PC-3 (cell line): ENCODE measurements at regions of chr13 and their contacts with region 1.

Region 1: GRCh38 chr13:60617991-60618733 is 221.1 kb downstream of the TDRD3 start:
- DNase-seq: peak; percentile 43
- ATAC-seq: peak; percentile 80
- H3K4me3 ChIP-seq: no peak overlapping the region
- H3K27ac ChIP-seq: no peak overlapping the region
- H3K4me1 ChIP-seq: no peaks in the 10 kb centered on the region
- H3K27me3 ChIP-seq: peaks cover 11% of the 10 kb centered on the region
- CTCF ChIP-seq: peak; percentile 62

Region 2: DNA sequence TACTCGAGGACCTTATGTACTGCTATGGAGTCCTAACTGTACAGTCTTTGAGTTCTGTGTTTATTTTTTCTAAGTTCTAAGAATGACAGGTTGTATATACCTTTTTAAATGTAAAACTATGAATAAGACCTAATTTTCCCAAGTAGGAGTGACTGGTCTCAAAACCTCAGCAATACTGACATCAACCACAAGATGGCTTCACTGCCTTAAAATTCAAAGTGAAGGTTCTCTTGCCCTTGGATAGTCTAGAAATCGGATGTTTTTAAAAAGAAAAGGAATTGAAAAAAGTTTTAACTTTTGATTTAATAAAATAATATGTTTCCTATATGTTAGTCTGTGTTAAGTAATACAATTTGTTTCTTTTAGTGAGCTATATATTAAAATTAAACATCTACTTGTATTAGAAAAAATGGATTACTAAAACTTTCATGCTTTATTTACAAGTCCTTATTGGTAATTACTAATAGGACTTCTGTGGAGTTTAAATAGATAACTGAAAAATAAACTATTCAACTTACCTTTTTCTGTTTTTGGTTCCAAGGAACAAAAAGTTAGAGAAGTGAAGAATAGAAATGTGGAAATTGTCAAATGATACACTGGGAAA is 169.2 kb before region 1 on chr13:
- CTCF ChIA-PET with region 1: no interaction called
- POLR2A ChIA-PET with region 1: no interaction called
- intact Hi-C with region 1: loop called (anchors 1 kb)
- DNase-seq: peak; percentile 52
- ATAC-seq: peak; percentile 48
- H3K4me3 ChIP-seq: no peak overlapping the region
- H3K27ac ChIP-seq: no peak overlapping the region
- H3K4me1 ChIP-seq: no peaks in the 10 kb centered on the region
- H3K27me3 ChIP-seq: no peaks in the 10 kb centered on the region
- CTCF ChIP-seq: peak; percentile 64

Region 3: GRCh38 chr13:60562081-60562780 is 55.9 kb before region 1 on chr13:
- CTCF ChIA-PET with region 1: interaction called, 11 read pairs
- POLR2A ChIA-PET with region 1: no interaction called
- intact Hi-C with region 1: no loop called
- DNase-seq: peak; percentile 5
- ATAC-seq: no peak
- H3K4me3 ChIP-seq: no peak overlapping the region
- H3K27ac ChIP-seq: no peak overlapping the region
- H3K4me1 ChIP-seq: no peaks in the 10 kb centered on the region
- H3K27me3 ChIP-seq: no peaks in the 10 kb centered on the region
- CTCF ChIP-seq: no peak

Region 4: GRCh38 chr13:60745343-60745742 is 127.2 kb after region 1 on chr13:
- CTCF ChIA-PET with region 1: no interaction called
- POLR2A ChIA-PET with region 1: no interaction called
- intact Hi-C with region 1: no loop called
- DNase-seq: no peak
- ATAC-seq: no peak
- H3K4me3 ChIP-seq: no peak overlapping the region
- H3K27ac ChIP-seq: no peak overlapping the region
- H3K4me1 ChIP-seq: no peaks in the 10 kb centered on the region
- H3K27me3 ChIP-seq: no peaks in the 10 kb centered on the region
- CTCF ChIP-seq: no peak

Region 5: DNA sequence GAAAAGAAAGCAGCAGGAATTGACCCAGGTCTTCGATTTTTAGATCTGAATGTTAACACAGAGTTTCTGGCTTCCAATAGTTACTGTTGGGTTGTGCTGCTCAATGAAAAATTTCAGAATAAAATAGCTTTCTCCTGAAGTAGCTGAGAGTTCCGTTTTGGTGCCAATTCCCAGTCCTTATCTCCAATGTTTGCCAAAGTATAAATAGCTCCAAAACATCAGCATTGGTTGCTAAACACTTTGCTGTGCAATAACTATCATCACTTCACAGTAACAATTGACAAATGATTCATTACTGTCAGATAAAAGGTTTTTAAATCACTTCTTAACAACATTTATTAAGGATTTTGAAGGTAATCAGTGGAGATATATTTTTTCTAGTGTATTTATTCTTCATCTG is 351.5 kb after region 1 on chr13:
- CTCF ChIA-PET with region 1: no interaction called
- POLR2A ChIA-PET with region 1: no interaction called
- intact Hi-C with region 1: no loop called
- DNase-seq: no peak
- ATAC-seq: no peak
- H3K4me3 ChIP-seq: no peak overlapping the region
- H3K27ac ChIP-seq: no peak overlapping the region
- H3K4me1 ChIP-seq: no peaks in the 10 kb centered on the region
- H3K27me3 ChIP-seq: no peaks in the 10 kb centered on the region
- CTCF ChIP-seq: no peak

Region 6: DNA sequence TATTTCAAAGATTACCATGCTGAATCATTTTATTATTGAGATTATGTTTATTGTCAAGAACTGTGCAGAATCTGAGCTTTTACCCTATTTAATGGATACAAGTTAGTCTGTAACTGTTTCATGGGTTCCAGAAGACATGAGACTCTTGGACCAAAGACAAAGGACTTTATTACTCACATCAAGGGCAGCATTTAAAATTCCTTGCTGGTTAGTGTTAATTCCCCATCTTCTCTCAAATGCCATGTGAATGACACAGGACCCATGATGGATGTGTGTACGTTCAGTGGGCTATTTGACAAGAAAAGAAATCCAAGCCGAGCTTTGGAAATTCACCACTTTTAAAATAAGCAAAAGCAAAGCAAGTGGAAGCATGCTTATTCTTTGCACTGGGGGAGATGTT is 657.6 kb after region 1 on chr13:
- CTCF ChIA-PET with region 1: no interaction called
- POLR2A ChIA-PET with region 1: no interaction called
- intact Hi-C with region 1: no loop called
- DNase-seq: no peak
- ATAC-seq: no peak
- H3K4me3 ChIP-seq: no peak overlapping the region
- H3K27ac ChIP-seq: no peak overlapping the region
- H3K4me1 ChIP-seq: no peaks in the 10 kb centered on the region
- H3K27me3 ChIP-seq: no peaks in the 10 kb centered on the region
- CTCF ChIP-seq: no peak